ENCODE measurements at regions of chr6 and their contacts with region 1.

Region 1: DNA sequence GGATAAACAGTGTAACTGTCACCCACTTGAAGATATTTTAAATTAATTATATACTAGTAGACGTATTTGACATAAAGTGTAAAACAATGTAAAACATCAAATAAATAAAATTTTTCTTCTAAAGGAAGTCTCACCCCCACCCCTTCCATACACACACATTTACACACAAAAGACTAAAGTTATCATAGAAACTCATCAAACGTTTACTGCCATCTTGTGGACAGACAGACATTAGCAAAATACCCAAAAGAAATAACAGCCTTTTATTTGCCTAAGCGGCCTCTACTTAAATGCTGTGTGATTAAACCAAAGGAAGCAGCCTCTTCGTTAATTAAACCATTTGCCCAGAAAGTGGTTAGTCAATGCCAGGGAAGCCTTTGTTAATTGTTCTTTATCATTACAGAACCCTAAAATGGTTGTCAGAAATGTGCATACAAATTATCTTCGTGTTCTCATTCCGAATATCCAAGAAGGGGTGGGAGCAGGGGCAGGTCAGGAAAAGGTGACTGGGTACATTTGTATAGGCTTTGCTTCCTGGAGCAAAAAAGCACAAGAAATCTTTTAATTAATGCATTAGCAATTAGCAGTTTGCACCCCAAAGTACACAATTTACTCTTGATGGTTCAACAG is 176.2 kb upstream of the SASH1 start:
- DNase-seq: peak in 3 of 14 experiments; percentile 40 to 56 (median 50)
- ATAC-seq: no peak
- H3K4me3 ChIP-seq: no peak overlapping the region
- H3K4me3 Mint-ChIP-seq: no peak overlapping the region
- H3K27ac ChIP-seq: no peak overlapping the region
- H3K27ac Mint-ChIP-seq: no peak overlapping the region
- H3K4me1 ChIP-seq: no peaks in the 10 kb centered on the region
- H3K4me1 Mint-ChIP-seq: no peaks in the 10 kb centered on the region
- H3K27me3 ChIP-seq: no peaks in the 10 kb centered on the region
- H3K27me3 Mint-ChIP-seq: peaks cover 19% of the 10 kb centered on the region
- CTCF ChIP-seq: peak; percentile 66

Region 2: DNA sequence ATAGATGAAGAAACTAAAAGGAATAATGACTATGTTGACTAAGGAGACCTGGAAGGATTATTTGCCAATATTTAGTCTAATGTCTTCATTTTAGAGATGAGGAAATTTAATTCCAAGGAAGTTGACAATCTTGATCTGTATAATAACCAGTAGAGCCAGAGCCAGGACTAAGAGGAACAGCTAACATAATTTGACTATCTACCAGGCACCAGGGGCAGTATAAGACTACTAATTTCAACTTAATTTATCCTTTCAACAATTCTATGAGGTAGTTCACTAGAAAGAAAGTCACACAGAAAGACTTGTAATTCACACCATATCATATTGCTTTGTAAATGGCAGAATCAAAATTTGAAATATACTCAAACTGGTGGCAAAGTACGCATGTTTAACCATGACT is 1235.2 kb before region 1 on chr6:
- CTCF ChIA-PET with region 1: no interaction called
- POLR2A ChIA-PET with region 1: no interaction called
- intact Hi-C with region 1: loop called in 1 of 2 experiments (anchors 10 kb)
- DNase-seq: peak in 2 of 14 experiments; percentile 11 to 15
- ATAC-seq: no peak
- H3K4me3 ChIP-seq: no peak overlapping the region
- H3K4me3 Mint-ChIP-seq: no peak overlapping the region
- H3K27ac ChIP-seq: no peak overlapping the region
- H3K27ac Mint-ChIP-seq: no peak overlapping the region
- H3K4me1 ChIP-seq: no peaks in the 10 kb centered on the region
- H3K4me1 Mint-ChIP-seq: no peaks in the 10 kb centered on the region
- H3K27me3 ChIP-seq: no peaks in the 10 kb centered on the region
- H3K27me3 Mint-ChIP-seq: no peaks in the 10 kb centered on the region
- CTCF ChIP-seq: peak; percentile 32

Region 3: GRCh38 chr6:147390909-147391536 is 775.4 kb before region 1 on chr6:
- CTCF ChIA-PET with region 1: no interaction called
- POLR2A ChIA-PET with region 1: no interaction called
- intact Hi-C with region 1: loop called in 1 of 2 experiments (anchors 2 kb)
- DNase-seq: no peak
- ATAC-seq: no peak
- H3K4me3 ChIP-seq: no peak overlapping the region
- H3K4me3 Mint-ChIP-seq: no peak overlapping the region
- H3K27ac ChIP-seq: no peak overlapping the region
- H3K27ac Mint-ChIP-seq: no peak overlapping the region
- H3K4me1 ChIP-seq: no peaks in the 10 kb centered on the region
- H3K4me1 Mint-ChIP-seq: peaks cover 4% of the 10 kb centered on the region
- H3K27me3 ChIP-seq: no peaks in the 10 kb centered on the region
- H3K27me3 Mint-ChIP-seq: no peaks in the 10 kb centered on the region
- CTCF ChIP-seq: no peak

Region 4: DNA sequence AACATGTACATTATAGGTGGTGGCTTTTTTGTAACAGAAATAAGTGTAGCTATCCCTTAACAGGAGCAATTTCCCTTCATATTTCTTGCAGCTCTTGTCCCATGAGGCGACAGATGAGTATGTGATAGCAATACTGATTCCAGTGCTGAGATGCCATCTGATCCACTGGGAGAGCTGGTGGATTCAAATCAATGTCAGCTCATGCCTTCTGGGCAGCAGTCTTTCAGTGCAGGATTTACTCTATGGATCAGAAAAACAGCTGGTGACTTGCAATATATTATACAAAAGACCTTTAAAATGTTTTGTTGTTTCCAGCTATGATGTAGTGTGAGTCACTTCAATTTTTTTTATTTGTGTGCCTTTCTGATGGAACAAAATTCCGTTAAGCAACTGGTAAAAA is 83.8 kb before region 1 on chr6:
- CTCF ChIA-PET with region 1: no interaction called
- POLR2A ChIA-PET with region 1: no interaction called
- intact Hi-C with region 1: no loop called
- DNase-seq: no peak
- ATAC-seq: no peak
- H3K4me3 ChIP-seq: no peak overlapping the region
- H3K4me3 Mint-ChIP-seq: no peak overlapping the region
- H3K27ac ChIP-seq: no peak overlapping the region
- H3K27ac Mint-ChIP-seq: no peak overlapping the region
- H3K4me1 ChIP-seq: no peaks in the 10 kb centered on the region
- H3K4me1 Mint-ChIP-seq: no peaks in the 10 kb centered on the region
- H3K27me3 ChIP-seq: no peaks in the 10 kb centered on the region
- H3K27me3 Mint-ChIP-seq: peaks cover 39% of the 10 kb centered on the region
- CTCF ChIP-seq: no peak